Tibial artery (tissue), 4 donors: ENCODE measurements at regions of chr6 and their contacts with region 1.

Region 1: DNA sequence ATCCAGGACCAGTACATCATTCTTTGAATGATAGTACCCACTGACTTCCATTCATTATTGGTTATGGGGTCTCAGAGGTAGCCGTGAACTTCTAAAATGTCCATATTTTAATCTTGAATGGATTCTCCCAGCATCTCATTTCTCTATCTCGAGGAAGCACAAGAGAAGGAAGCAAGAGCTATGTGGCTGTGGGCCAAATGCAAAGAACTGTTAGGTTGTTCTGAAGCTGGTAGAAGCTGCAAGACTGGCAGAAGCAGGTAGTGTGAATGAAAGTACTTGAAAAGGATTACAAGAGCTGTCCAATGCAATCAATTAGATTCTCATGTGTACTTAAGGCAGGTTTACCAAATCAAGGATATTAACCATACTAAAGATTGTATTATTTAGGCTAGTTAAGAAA is 1131.8 kb downstream of the GRIK2 start:
- DNase-seq: no peak
- H3K4me3 ChIP-seq: no peak overlapping the region
- H3K27ac ChIP-seq: no peak overlapping the region
- H3K4me1 ChIP-seq: no peaks in the 10 kb centered on the region
- H3K27me3 ChIP-seq: no peaks in the 10 kb centered on the region
- CTCF ChIP-seq: no peak

Region 2: DNA sequence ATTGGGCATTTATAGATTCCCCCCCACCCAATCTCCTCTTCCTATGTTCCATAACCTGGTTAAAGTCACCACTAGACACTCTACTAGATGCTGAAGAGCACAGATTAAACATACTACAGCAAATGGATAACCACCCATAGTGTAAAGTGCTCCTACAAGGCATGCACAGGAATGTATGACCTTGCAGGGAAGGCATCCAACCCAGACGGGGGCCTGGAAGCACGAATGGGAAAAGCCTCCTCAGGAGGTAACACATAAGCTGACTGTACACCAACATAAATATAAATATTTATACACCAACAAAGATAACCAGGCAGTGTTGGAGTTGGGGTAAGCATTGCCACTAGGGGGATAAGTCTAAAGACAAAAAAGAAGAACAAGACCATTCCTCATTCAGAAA is 440.1 kb before region 1 on chr6:
- intact Hi-C with region 1: no loop called
- DNase-seq: no peak
- H3K4me3 ChIP-seq: no peak overlapping the region
- H3K27ac ChIP-seq: no peak overlapping the region
- H3K4me1 ChIP-seq: no peaks in the 10 kb centered on the region
- H3K27me3 ChIP-seq: no peaks in the 10 kb centered on the region
- CTCF ChIP-seq: no peak

Region 3: DNA sequence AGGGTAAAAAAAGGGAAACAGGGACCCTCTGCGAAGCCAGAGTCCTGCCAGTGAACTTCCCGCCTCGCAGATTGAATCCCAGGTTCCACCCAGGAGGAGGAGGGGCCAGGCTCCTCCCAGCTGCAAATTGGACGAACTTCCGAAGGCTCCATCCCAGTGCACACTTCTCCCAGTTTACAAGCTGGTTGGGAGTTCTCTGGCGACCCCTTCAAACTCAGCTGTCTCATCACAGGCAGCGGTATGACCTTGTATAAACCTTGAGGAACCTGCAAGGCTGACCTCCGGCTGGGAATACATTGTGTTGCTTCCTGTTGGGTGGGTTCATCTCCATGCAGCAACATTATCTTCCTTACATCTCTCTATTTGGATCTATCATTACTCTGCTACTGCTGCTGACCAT is 169.2 kb before region 1 on chr6:
- intact Hi-C with region 1: no loop called
- DNase-seq: peak in 1 of 2 donors; percentile 37
- H3K4me3 ChIP-seq: no peak overlapping the region
- H3K27ac ChIP-seq: no peak overlapping the region
- H3K4me1 ChIP-seq: no peaks in the 10 kb centered on the region
- H3K27me3 ChIP-seq: no peaks in the 10 kb centered on the region
- CTCF ChIP-seq: no peak

Region 4: DNA sequence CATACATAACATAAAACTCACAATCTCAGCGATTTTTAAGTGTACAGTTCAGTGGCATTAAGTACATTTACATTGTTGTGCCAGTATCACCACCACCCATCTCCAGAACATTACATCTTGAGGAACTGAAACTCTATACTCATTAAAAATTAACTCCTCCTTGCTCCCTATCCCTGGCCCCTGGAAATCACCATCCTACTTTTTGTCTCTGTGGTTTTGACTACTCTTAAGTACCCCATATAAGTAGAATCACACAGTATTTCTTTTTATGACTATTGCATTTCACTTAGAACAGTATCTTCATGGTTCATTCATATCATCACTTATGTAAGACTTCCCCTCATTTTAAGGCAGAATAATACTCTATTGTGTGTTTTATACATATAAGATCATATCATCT is 23.7 kb before region 1 on chr6:
- intact Hi-C with region 1: loop called (anchors 1 kb)
- DNase-seq: no peak
- H3K4me3 ChIP-seq: no peak overlapping the region
- H3K27ac ChIP-seq: no peak overlapping the region
- H3K4me1 ChIP-seq: no peaks in the 10 kb centered on the region
- H3K27me3 ChIP-seq: no peaks in the 10 kb centered on the region
- CTCF ChIP-seq: no peak